Naive thymus-derived CD4-positive, alpha-beta T cell (primary cell): ENCODE measurements at regions of chr1 and their contacts with region 1.

Region 1: GRCh38 chr1:66446261-66447001 is 87.5 kb upstream of the SGIP1 start:
- DNase-seq: peak in 7 of 9 donors; percentile 45 to 82 (median 74)
- ATAC-seq: peak; percentile 85
- H3K4me3 ChIP-seq: no peak overlapping the region
- H3K4me3 Mint-ChIP-seq: peak overlapping the region in 9 of 10 donors; percentile 59 to 85 (median 74)
- H3K27ac ChIP-seq: peak overlapping the region; percentile 72
- H3K27ac Mint-ChIP-seq: peak overlapping the region; percentile 87 to 98 (median 94)
- H3K4me1 ChIP-seq: peaks cover 12 to 18% of the 10 kb centered on the region in 2 donors
- H3K4me1 Mint-ChIP-seq: peaks cover 18 to 32% (median 25%) of the 10 kb centered on the region in 7 donors
- H3K27me3 ChIP-seq: no peaks in the 10 kb centered on the region
- H3K27me3 Mint-ChIP-seq: peaks cover 0 to 20% (median 0%) of the 10 kb centered on the region in 5 donors

Region 2: GRCh38 chr1:65067491-65068201 is 1378.8 kb before region 1 on chr1:
- CTCF ChIA-PET with region 1: no interaction called
- POLR2A ChIA-PET with region 1: no interaction called
- intact Hi-C with region 1: loop called in 1 of 2 experiments (anchors 10 kb)
- DNase-seq: peak; percentile 48 to 75 (median 67)
- ATAC-seq: peak; percentile 39
- H3K4me3 ChIP-seq: peak overlapping the region; percentile 78
- H3K4me3 Mint-ChIP-seq: peak overlapping the region; percentile 85 to 99 (median 97)
- H3K27ac ChIP-seq: peak overlapping the region; percentile 90
- H3K27ac Mint-ChIP-seq: peak overlapping the region; percentile 93 to 100 (median 100)
- H3K4me1 ChIP-seq: peaks cover 16 to 24% of the 10 kb centered on the region in 2 donors
- H3K4me1 Mint-ChIP-seq: peaks cover 43 to 62% (median 55%) of the 10 kb centered on the region in 7 donors
- H3K27me3 ChIP-seq: no peaks in the 10 kb centered on the region
- H3K27me3 Mint-ChIP-seq: no peaks in the 10 kb centered on the region

Region 3: DNA sequence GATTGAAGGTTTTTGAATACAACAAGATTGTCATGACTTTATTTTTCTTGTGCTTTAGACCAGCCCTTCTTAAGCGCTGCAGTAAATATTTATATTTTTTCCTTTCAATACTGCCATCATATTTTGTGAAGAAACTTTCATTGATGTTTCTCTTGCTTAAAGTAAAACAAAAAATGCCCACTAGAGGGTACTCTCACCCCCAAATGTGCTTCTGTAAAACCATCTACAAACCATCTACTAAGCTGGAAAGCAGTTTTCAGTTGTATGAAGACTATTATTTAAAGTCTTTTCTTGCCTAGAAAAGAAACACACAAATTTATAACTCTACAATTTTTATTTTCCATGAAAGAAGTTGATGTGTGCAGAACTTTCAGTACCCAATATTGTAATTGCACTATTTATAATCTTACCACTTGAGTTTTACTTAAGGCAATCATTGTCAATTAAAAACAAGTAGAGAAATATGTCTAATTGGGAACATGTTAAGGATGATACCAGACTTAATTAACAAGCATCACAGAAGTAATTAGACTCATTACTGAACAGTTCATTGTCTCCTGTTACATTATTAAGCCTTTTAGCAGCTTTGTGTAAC is 1015.2 kb before region 1 on chr1:
- CTCF ChIA-PET with region 1: no interaction called
- POLR2A ChIA-PET with region 1: no interaction called
- intact Hi-C with region 1: loop called (anchors 1 to 10 kb)
- DNase-seq: peak in 5 of 9 donors; percentile 32 to 43 (median 33)
- ATAC-seq: peak; percentile 67
- H3K4me3 ChIP-seq: no peak overlapping the region
- H3K4me3 Mint-ChIP-seq: no peak overlapping the region
- H3K27ac ChIP-seq: no peak overlapping the region
- H3K27ac Mint-ChIP-seq: no peak overlapping the region
- H3K4me1 ChIP-seq: no peaks in the 10 kb centered on the region
- H3K4me1 Mint-ChIP-seq: peaks cover 0 to 28% (median 3%) of the 10 kb centered on the region in 7 donors
- H3K27me3 ChIP-seq: no peaks in the 10 kb centered on the region
- H3K27me3 Mint-ChIP-seq: no peaks in the 10 kb centered on the region

Region 4: GRCh38 chr1:66182551-66183178 is 263.8 kb before region 1 on chr1:
- CTCF ChIA-PET with region 1: no interaction called
- POLR2A ChIA-PET with region 1: no interaction called
- intact Hi-C with region 1: loop called in 1 of 2 experiments (anchors 5 kb)
- DNase-seq: peak in 8 of 9 donors; percentile 15 to 69 (median 40)
- ATAC-seq: peak; percentile 82
- H3K4me3 ChIP-seq: no peak overlapping the region
- H3K4me3 Mint-ChIP-seq: peak overlapping the region in 5 of 10 donors; percentile 8 to 73 (median 24)
- H3K27ac ChIP-seq: no peak overlapping the region
- H3K27ac Mint-ChIP-seq: peak overlapping the region in 7 of 9 donors; percentile 7 to 81 (median 49)
- H3K4me1 ChIP-seq: peaks cover 0 to 10% of the 10 kb centered on the region in 2 donors
- H3K4me1 Mint-ChIP-seq: peaks cover 0 to 35% (median 22%) of the 10 kb centered on the region in 7 donors
- H3K27me3 ChIP-seq: no peaks in the 10 kb centered on the region
- H3K27me3 Mint-ChIP-seq: peaks cover 0 to 3% (median 0%) of the 10 kb centered on the region in 5 donors

Region 5: DNA sequence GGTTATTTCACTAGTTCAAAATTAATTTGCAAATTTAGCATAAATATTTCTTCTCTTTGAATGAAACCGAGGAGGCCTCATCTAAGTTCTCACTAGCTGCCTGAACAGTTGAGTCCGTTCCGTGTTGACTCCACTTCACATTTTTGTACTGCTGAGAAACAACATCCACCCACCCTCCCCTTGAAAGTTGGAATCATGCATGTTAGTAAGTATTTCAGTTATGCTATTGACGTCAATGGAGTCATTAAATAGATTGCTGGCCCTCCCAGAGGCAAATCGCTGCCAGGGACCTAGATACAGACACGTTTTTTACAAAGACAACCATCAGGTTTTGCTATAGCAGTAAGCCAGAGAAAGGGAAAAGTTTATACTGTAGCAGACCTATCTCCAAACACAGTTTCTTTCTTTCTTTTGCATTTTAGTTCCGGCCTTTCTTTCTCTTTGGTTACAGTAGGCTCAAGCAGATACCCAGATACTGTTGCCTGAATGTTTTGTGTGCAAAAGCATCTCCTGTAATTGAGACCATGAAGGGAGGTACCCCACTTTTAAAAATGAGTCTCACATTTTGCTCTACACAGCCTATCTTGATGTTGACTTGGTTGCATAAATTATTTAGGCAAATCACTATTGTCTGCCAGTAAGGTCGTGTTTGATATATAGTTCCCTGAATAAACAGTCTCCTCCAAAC is 175.1 kb before region 1 on chr1:
- CTCF ChIA-PET with region 1: interaction called, 53 read pairs
- POLR2A ChIA-PET with region 1: interaction called, 3 read pairs
- intact Hi-C with region 1: no loop called
- DNase-seq: peak in 7 of 9 donors; percentile 43 to 72 (median 64)
- ATAC-seq: peak; percentile 64
- H3K4me3 ChIP-seq: no peak overlapping the region
- H3K4me3 Mint-ChIP-seq: peak overlapping the region in 9 of 10 donors; percentile 22 to 69 (median 33)
- H3K27ac ChIP-seq: peak overlapping the region; percentile 59
- H3K27ac Mint-ChIP-seq: peak overlapping the region; percentile 60 to 92 (median 87)
- H3K4me1 ChIP-seq: peaks cover 30 to 43% of the 10 kb centered on the region in 2 donors
- H3K4me1 Mint-ChIP-seq: peaks cover 36 to 69% (median 54%) of the 10 kb centered on the region in 7 donors
- H3K27me3 ChIP-seq: no peaks in the 10 kb centered on the region
- H3K27me3 Mint-ChIP-seq: no peaks in the 10 kb centered on the region

Region 6: DNA sequence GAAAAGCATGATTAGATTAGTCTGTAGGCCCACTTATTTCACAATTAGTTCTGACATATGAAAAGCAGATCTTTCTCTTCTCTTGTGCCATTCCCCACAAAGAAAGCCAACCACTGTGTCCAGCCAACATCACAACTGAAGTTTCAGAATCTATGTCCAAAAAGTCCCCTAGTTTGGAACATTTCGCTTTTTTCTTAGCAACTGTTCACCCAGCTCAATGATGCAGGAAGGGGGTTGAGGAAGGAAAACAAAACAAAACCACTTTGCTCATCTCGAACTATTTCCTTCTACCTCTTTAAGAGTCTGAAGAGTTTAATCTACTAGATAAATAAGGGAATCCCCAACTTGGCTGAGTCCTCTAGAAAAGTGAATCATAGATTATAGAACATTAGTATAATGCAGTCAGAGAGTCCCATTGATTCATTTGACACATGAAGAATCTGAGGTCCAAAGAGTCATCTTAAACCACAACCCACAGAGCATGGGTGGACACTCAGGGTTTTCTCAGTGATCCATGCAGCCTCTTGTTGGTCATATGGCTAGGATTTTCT is 71.8 kb before region 1 on chr1:
- CTCF ChIA-PET with region 1: interaction called, 8 read pairs
- POLR2A ChIA-PET with region 1: interaction called, 5 read pairs
- intact Hi-C with region 1: loop called (anchors 1 to 2 kb)
- DNase-seq: peak in 7 of 9 donors; percentile 27 to 49 (median 40)
- ATAC-seq: peak; percentile 83
- H3K4me3 ChIP-seq: no peak overlapping the region
- H3K4me3 Mint-ChIP-seq: peak overlapping the region in 9 of 10 donors; percentile 46 to 83 (median 67)
- H3K27ac ChIP-seq: peak overlapping the region; percentile 62
- H3K27ac Mint-ChIP-seq: peak overlapping the region; percentile 88 to 96 (median 92)
- H3K4me1 ChIP-seq: peaks cover 51 to 53% of the 10 kb centered on the region in 2 donors
- H3K4me1 Mint-ChIP-seq: peaks cover 52 to 74% (median 65%) of the 10 kb centered on the region in 7 donors
- H3K27me3 ChIP-seq: no peaks in the 10 kb centered on the region
- H3K27me3 Mint-ChIP-seq: no peaks in the 10 kb centered on the region

Region 7: DNA sequence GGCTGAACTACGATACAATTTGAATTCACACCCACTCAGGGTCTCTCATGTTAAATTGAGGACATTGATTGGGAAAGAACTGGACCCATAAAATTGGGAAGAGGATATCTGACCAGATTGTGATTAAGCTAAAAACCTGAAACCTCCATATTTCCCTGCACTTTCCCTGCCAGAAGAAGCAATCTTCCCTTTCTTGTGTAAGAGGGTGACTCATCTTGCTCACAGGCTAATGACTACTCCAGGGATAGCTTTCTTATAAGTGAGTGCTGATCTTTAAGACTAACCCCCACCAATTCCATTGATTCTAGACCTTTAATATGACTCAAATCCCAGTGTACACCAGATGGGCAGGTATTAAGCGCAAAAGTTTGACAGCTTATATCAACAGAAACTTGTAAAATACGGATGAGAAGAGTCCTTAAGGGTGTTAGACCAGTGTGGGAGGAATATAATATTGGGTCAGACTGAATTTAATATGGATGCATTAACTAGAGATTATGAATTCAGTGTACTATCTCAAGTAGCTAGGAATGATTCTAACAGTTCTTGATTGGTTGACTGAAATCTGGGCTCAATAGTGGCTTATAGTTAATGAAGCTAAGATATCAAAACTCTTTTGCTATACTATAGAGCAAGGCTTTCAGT is 75.4 kb after region 1 on chr1:
- CTCF ChIA-PET with region 1: no interaction called
- POLR2A ChIA-PET with region 1: no interaction called
- intact Hi-C with region 1: no loop called
- DNase-seq: no peak
- ATAC-seq: no peak
- H3K4me3 ChIP-seq: no peak overlapping the region
- H3K4me3 Mint-ChIP-seq: no peak overlapping the region
- H3K27ac ChIP-seq: no peak overlapping the region
- H3K27ac Mint-ChIP-seq: no peak overlapping the region
- H3K4me1 ChIP-seq: no peaks in the 10 kb centered on the region
- H3K4me1 Mint-ChIP-seq: no peaks in the 10 kb centered on the region
- H3K27me3 ChIP-seq: no peaks in the 10 kb centered on the region
- H3K27me3 Mint-ChIP-seq: peaks cover 0 to 16% (median 0%) of the 10 kb centered on the region in 5 donors